Activated CD4-positive, alpha-beta memory T cell treated with anti-CD3 and anti-CD28 coated beads for 36 hours (primary cell): ENCODE measurements at regions of chrX and their contacts with region 1.

Region 1: GRCh38 chrX:136674270-136674985 is 26.5 kb downstream of the CD40LG start:
- DNase-seq: no peak
- H3K4me3 Mint-ChIP-seq: peak overlapping the region; percentile 55
- H3K27ac Mint-ChIP-seq: peak overlapping the region; percentile 73
- H3K4me1 Mint-ChIP-seq: peaks cover 90% of the 10 kb centered on the region
- H3K27me3 Mint-ChIP-seq: no peaks in the 10 kb centered on the region

Region 2: DNA sequence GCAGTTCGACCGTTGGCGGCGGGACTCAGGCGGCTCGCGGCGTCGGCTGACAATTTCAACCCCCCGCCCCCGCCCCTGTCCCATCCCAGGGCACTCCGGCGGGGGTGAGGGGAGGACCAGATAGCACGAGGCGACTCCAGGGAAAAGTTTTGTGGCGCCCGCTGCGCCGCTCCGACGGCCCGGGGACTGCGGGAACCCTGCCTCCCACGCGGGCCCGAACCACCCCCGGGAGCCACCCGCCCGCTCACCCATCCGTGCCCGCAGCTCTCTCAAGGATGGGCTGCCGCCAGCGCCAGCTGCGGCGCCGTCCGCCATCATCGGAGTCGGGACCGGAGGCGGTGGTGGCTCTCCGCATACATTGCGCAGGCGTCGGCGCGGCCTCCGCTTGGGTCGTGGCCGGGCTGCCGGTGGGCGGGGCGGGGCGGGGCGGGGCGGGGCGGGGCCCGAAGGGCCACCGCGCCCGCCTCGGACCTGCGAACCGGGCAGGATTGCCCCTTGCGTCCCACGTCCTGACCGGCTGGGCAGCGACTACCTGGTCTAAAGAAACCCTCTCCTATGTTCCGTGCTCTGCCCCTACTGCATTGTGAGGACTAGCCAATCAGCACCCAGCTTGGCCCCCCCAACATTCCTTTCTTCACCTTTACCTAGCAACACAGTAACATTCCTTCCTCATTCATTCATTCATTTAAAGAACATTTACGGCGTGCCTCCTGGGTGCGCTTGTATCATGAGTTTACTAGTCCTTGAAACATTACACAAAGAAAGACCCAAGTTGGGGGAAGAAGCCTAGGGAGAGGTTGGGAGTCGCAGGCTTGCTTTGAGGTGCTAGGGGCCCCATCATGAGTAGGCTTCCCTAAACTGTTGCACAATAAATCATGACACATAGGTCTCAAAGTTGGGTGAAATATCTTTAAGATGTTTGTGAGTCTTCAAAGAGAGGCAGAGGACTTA is 423.1 kb before region 1 on chrX and contains the start of gene MAP7D3:
- CTCF ChIA-PET with region 1: no interaction called
- POLR2A ChIA-PET with region 1: no interaction called
- intact Hi-C with region 1: loop called (anchors 10 kb)
- DNase-seq: peak; percentile 76
- H3K4me3 Mint-ChIP-seq: peak within 1 kb of the TSS; percentile 82
- H3K27ac Mint-ChIP-seq: peak within 1 kb of the TSS; percentile 77
- H3K4me1 Mint-ChIP-seq: peaks cover 11% of the 10 kb centered on the region
- H3K27me3 Mint-ChIP-seq: no peaks in the 10 kb centered on the region
- total RNA-seq, gene MAP7D3: 18.2 to 20.5 TPM

Region 3: GRCh38 chrX:136588041-136588788 is 86.2 kb before region 1 on chrX:
- CTCF ChIA-PET with region 1: no interaction called
- POLR2A ChIA-PET with region 1: no interaction called
- intact Hi-C with region 1: no loop called
- DNase-seq: no peak
- H3K4me3 Mint-ChIP-seq: peak overlapping the region; percentile 12
- H3K27ac Mint-ChIP-seq: peak overlapping the region; percentile 74
- H3K4me1 Mint-ChIP-seq: peaks cover 66% of the 10 kb centered on the region
- H3K27me3 Mint-ChIP-seq: no peaks in the 10 kb centered on the region

Region 4: DNA sequence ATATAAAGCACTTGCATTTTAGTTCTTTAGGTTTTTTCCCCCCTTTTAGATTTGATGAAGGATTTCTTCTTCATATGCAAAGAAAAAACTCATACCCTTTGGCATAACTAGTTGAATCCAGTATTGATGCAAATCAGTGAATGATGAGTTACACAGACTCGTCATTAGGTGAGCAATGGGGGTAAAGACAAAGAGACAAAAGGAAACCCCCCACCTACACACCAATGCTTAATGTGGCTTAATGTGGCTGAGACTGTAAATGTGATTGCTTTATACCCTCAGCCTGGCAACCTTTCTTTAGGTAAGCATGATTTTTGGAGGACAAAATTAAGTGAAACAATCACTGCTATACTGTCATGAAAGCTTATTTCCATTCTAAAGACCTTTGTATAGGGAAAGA is 13.0 kb after region 1 on chrX:
- CTCF ChIA-PET with region 1: interaction called, 5 read pairs
- POLR2A ChIA-PET with region 1: interaction called, 3 read pairs
- intact Hi-C with region 1: loop called (anchors 1 kb)
- DNase-seq: peak; percentile 48
- H3K4me3 Mint-ChIP-seq: peak overlapping the region; percentile 17
- H3K27ac Mint-ChIP-seq: peak overlapping the region; percentile 83
- H3K4me1 Mint-ChIP-seq: peaks cover 53% of the 10 kb centered on the region
- H3K27me3 Mint-ChIP-seq: no peaks in the 10 kb centered on the region